Caco-2 (cell line): ENCODE measurements at regions of chr1 and their contacts with region 1.

Region 1: GRCh38 chr1:236534151-236534651 is 10.4 kb downstream of the LGALS8 start:
- DNase-seq: no peak
- H3K4me3 ChIP-seq: no peak overlapping the region
- H3K4me3 Mint-ChIP-seq: no peak overlapping the region
- H3K27ac Mint-ChIP-seq: no peak overlapping the region
- H3K4me1 ChIP-seq: peaks cover 14% of the 10 kb centered on the region; the same call in 1 of the 2 replicates
- H3K4me1 Mint-ChIP-seq: peaks cover 13% of the 10 kb centered on the region
- H3K27me3 ChIP-seq: no peaks in the 10 kb centered on the region
- H3K27me3 Mint-ChIP-seq: no peaks in the 10 kb centered on the region
- CTCF ChIP-seq: no peak

Region 2: DNA sequence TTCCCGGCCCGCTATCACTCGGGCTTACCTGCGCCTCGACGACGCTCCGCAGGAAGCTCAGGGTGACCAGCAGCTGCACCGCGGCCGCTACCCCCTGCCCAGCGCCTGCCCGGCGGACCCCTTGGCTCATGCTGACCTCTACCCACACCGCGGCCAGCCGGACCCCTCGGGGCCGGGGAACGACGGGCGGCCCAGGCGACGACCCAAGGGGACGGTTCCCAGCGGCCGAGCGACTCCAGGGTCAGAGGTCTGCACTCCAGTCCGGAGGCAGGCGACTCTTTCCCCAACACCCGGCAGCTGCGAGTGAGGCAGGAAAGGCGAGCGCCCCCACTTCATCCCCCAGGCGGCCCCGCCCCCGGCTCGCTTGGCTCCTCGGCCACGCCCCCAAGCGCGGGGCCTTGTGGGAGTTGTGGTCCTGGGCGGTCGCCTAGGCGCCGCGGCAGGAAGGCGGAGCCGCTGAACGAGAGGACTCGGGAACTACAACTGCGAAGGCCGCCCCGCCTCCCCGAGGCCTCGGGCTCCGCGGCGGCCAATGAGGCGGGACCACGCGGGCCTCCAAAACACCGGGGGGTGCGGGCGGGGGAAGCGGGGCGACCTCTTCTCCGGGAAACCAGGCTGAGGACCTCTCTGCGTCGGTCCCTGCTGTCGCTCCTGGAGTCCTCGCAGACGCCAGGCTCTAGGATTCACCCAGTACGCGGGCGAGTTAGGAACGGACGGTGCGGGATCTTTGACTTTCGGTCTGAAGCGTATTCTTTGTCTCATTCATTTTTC is 252.4 kb before region 1 on chr1 and contains the start of gene ERO1B:
- CTCF ChIA-PET with region 1: no interaction called
- POLR2A ChIA-PET with region 1: no interaction called
- intact Hi-C with region 1: loop called (anchors 10 kb)
- DNase-seq: peak; percentile 93 to 97
- H3K4me3 ChIP-seq: peak within 1 kb of the TSS; percentile 86
- H3K4me3 Mint-ChIP-seq: peak within 1 kb of the TSS; percentile 70
- H3K27ac Mint-ChIP-seq: no peak within 1 kb of the TSS
- H3K4me1 ChIP-seq: no peaks in the 10 kb centered on the region
- H3K4me1 Mint-ChIP-seq: peaks cover 6% of the 10 kb centered on the region
- H3K27me3 ChIP-seq: peaks cover 1% of the 10 kb centered on the region; the same call in 1 of the 2 replicates
- H3K27me3 Mint-ChIP-seq: peaks cover 14% of the 10 kb centered on the region
- CTCF ChIP-seq: no peak
- total RNA-seq, gene ERO1B: 2.3 and 2.6 TPM in 2 replicates

Region 3: DNA sequence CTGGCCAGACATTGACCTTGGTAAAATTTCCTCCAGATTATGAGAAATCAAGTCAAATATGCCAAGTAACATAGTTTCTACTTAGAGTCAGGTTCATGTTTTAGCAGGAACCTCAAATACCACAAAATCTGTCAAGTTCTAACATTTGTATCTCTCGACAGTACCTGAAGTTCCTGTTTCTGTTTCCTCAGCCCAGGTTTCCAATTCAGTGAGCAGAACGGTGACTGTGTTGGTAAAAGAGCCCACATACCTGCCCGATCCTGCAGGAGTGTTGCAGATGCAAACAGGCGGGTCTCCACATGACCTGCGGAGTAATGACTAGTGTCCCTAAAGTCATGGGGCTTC is 68.3 kb before region 1 on chr1:
- CTCF ChIA-PET with region 1: no interaction called
- POLR2A ChIA-PET with region 1: no interaction called
- intact Hi-C with region 1: no loop called
- DNase-seq: no peak
- H3K4me3 ChIP-seq: no peak overlapping the region
- H3K4me3 Mint-ChIP-seq: no peak overlapping the region
- H3K27ac Mint-ChIP-seq: no peak overlapping the region
- H3K4me1 ChIP-seq: peaks cover 6% of the 10 kb centered on the region; the same call in 1 of the 2 replicates
- H3K4me1 Mint-ChIP-seq: peaks cover 13% of the 10 kb centered on the region
- H3K27me3 ChIP-seq: no peaks in the 10 kb centered on the region
- H3K27me3 Mint-ChIP-seq: no peaks in the 10 kb centered on the region
- CTCF ChIP-seq: no peak

Region 4: DNA sequence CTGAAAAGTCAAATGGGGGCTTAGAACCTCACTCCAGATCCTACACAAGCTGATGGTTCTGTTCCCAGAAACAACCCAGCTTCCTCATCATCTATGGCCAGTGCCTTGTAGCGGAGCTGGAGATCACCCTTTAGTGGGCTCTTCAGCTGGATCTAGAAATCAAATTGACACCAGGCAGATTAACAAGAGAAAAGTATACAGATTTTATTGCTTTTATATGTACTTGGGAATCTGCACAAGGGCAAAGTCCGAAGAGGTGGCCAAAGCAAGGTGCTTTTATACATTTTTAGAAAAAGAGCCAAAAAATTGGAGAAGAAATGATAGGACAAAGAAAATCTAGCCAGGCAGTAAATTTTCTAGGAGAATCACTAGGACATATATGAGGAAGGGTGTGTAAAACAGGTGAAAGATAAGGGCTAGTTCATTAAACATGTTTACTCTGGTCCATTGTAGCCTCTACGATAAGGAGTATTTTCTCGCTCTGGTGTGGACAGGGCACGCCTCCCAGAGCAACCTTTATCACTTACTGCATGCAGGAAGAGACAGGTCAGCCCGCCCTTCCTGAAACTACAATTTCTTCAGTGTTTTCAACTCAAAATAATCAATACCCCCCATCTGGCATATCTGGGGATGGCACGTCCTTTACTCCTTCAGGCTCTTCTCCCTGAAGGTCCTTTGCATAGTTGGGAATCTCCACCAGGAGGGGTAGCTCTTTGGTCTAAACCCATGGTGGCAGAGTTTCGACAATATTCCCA is 24.4 kb before region 1 on chr1:
- CTCF ChIA-PET with region 1: no interaction called
- POLR2A ChIA-PET with region 1: no interaction called
- intact Hi-C with region 1: loop called (anchors 1 kb)
- DNase-seq: peak; percentile 52 to 58
- H3K4me3 ChIP-seq: no peak overlapping the region
- H3K4me3 Mint-ChIP-seq: peak overlapping the region; percentile 7
- H3K27ac Mint-ChIP-seq: peak overlapping the region; percentile 86
- H3K4me1 ChIP-seq: peaks cover 45% of the 10 kb centered on the region
- H3K4me1 Mint-ChIP-seq: peaks cover 47% of the 10 kb centered on the region
- H3K27me3 ChIP-seq: no peaks in the 10 kb centered on the region
- H3K27me3 Mint-ChIP-seq: no peaks in the 10 kb centered on the region
- CTCF ChIP-seq: peak; percentile 47 to 50